ENCODE measurements at regions of chr13 and their contacts with region 1.

Region 1: DNA sequence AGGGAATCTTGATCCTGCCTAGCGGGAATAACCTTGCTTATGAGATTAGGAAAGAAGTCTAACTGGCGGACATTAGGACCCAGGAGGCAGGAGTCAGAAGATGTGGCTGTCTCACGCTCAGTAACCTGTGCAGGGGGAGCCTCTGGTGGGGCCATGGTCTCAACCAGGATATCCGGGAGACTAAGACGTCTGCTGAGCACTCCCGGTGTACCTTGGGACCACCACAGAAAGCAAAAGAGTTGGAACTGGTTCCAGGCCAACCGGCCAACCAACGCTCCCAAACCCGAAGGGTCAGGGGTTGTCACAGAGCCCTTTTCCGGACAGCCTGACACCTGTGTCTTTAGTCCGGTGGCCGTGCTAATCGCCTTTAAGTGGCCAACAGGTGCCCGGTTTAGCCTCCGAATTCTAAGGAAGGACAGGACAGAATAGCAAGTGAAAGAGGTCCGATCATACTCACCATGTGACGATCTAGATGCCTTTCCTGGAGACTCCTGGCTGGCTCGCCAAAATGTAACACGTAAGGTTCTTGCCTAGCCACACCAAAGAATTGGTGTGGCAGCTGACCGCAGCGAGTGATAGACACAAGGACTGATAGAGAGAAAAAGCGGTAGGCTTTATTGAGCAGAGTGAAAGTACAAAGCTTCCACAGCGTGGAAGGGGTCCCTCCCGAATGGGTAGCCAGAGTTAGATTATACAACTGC is 103.9 kb upstream of the DIAPH3 start:
- DNase-seq: no peak
- H3K4me3 Mint-ChIP-seq: no peak overlapping the region
- H3K27ac Mint-ChIP-seq: no peak overlapping the region
- H3K4me1 Mint-ChIP-seq: no peaks in the 10 kb centered on the region
- H3K27me3 Mint-ChIP-seq: peaks cover 20% of the 10 kb centered on the region

Region 2: DNA sequence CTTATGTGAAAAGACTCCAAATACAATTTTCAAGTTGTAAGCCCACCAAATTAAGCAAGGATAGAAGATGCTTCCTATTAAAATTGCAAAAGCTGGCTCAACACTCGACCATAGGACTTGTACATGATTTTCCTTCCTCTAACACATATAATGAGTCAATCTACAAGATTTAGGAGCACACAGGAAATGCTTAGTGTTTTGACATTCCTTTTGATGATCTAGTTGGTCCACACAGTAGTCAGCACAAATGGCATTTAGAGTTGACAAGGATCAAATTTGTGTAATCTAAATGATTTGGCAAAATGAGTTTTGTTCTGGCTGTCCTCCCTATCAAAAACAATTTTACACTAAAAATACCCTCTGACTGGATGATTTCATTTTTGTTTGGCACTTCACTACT is 444.2 kb before region 1 on chr13:
- intact Hi-C with region 1: no loop called
- DNase-seq: no peak
- H3K4me3 Mint-ChIP-seq: no peak overlapping the region
- H3K27ac Mint-ChIP-seq: no peak overlapping the region
- H3K4me1 Mint-ChIP-seq: no peaks in the 10 kb centered on the region
- H3K27me3 Mint-ChIP-seq: no peaks in the 10 kb centered on the region

Region 3: DNA sequence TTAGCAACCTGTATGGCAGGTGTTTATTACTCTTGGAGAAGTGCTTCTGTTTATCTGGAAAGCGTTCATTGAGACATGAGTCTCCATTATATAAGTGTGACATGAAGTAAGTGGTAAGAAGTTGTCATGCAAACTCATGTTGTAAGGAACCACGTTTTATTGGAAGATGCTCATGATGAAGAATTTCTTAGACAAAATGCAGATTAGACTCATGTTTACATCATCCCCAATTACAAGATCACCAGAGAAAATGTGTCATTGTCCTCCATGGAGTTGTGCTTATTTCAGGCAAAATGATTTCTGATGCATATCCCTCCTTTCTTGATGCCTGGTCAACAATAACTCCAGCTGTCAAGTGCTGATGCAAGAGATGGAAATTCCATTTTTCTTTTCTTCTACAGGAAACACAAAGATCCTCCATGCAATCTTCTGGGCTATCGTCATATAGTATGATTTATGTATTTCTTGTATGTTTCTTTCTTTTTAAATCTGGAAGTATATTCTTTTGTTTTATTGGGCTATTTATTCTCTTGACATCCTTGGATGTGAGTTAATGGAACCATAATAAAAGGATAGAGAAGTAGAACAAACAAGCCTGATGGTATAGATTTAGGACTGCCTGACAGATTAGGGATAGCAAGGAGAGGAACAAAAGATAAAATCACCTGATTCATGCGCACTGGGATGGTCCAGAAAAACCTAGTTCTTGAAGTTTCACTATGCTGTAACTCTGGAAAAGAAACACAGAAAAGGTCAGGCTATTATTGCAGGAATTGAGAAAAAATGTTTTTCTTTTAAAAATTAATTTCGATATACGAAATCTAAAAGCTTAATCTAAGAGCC is 53.2 kb before region 1 on chr13:
- intact Hi-C with region 1: loop called (anchors 10 kb)
- DNase-seq: no peak
- H3K4me3 Mint-ChIP-seq: no peak overlapping the region
- H3K27ac Mint-ChIP-seq: no peak overlapping the region
- H3K4me1 Mint-ChIP-seq: no peaks in the 10 kb centered on the region
- H3K27me3 Mint-ChIP-seq: peaks cover 42% of the 10 kb centered on the region

Region 4: DNA sequence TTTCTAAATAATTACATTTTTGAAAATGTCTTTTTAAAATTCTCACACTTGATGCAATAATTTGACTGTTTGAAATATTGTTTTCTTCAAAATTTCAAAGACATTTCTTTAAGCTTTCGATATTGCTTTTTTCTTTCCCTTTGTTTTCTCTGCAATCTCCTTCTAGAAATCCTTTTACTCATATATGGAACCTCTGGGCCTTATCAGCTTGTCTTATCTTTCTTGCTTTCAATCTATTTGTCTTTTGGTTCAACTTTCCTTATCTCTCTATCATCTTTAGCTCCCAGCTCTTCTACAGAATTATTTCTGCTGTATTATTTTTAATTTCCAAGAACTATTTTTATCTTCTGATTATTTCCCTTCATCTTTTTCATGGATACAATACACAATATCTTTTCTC is 23.3 kb before region 1 on chr13:
- intact Hi-C with region 1: loop called (anchors 1 kb)
- DNase-seq: no peak
- H3K4me3 Mint-ChIP-seq: no peak overlapping the region
- H3K27ac Mint-ChIP-seq: peak overlapping the region; percentile 5
- H3K4me1 Mint-ChIP-seq: peaks cover 17% of the 10 kb centered on the region
- H3K27me3 Mint-ChIP-seq: peaks cover 23% of the 10 kb centered on the region

Region 5: GRCh38 chr13:60509601-60510386 is 242.1 kb after region 1 on chr13:
- intact Hi-C with region 1: no loop called
- DNase-seq: no peak
- H3K4me3 Mint-ChIP-seq: no peak overlapping the region
- H3K27ac Mint-ChIP-seq: no peak overlapping the region
- H3K4me1 Mint-ChIP-seq: no peaks in the 10 kb centered on the region
- H3K27me3 Mint-ChIP-seq: no peaks in the 10 kb centered on the region

Measured in activated T-helper 2 cell treated with anti-CD3 and anti-CD28 coated beads, Interferon-gamma antibody, Interleukin-2, Interleukin-4, amounts not matched to agents 10 μg/mL and 5 μg/mL and 100 μg/mL, durations not matched to agents 14 hours and 24 hours and 36 hours (primary cell).